Activated naive CD4-positive, alpha-beta T cell treated with anti-CD3 and anti-CD28 coated beads, Interleukin-2, amount 10 ng/mL, durations not matched to agents 7 days and 5 days (primary cell): ENCODE measurements at regions of chr17 and their contacts with region 1.

Region 1: DNA sequence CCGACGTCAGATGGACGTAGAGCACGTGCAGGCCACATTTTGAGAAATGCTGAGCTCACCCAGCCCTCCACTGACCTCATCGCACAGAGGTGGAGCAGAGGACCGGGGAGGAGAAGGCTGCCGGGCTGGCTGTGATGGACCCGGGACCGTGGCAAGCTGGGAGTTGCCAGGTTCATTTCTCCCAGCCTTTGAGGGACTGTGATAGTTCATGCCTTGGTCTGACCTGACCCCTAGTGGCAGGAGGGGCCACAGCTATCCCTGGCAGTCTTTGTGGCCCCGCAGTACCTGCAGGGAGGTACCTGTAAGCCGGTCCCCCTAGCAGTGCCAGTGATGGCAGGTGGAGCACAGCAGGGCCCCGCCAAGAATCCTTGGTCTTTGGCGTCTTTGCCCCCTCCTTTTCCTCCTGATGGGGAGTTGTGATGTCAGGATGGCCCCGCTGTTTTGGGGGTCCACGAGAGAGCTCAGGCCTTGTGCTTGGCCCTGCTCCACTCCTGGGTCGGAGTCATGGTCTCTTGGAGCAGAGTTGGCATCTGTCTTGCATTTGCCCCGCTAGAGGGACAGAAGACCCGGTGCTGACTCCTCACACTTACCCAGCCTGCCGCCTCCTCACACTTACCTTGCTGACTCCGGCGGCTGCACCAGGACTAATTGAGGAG is 50.4 kb downstream of the OR1D5 start:
- DNase-seq: peak; percentile 66
- H3K4me3 Mint-ChIP-seq: no peak overlapping the region
- H3K27ac Mint-ChIP-seq: no peak overlapping the region
- H3K4me1 Mint-ChIP-seq: no peaks in the 10 kb centered on the region
- H3K27me3 Mint-ChIP-seq: no peaks in the 10 kb centered on the region

Region 2: GRCh38 chr17:2847381-2848333 is 165.4 kb before region 1 on chr17:
- CTCF ChIA-PET with region 1: interaction called, 27 read pairs
- DNase-seq: no peak
- H3K4me3 Mint-ChIP-seq: no peak overlapping the region
- H3K27ac Mint-ChIP-seq: no peak overlapping the region
- H3K4me1 Mint-ChIP-seq: peaks cover 18% of the 10 kb centered on the region
- H3K27me3 Mint-ChIP-seq: peaks cover 45% of the 10 kb centered on the region

Region 3: DNA sequence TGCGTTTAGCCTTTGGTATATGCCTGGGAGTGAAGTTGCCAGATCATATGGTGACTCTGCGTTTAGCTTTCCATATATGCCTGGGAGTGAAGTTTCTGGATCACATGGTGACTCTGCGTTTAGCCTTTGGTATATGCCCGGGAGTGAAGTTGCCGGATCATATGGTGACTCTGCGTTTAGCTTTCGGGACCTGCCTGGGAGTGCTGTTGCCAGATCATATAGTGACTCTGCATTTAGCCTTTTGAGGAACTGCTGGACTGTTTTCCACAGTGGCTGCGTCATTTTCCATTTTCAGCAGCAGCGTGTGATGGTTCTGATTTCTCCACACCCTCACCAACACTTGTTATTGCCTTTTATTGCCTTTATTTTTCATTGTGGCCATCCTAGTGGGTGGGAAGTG is 22.7 kb before region 1 on chr17:
- CTCF ChIA-PET with region 1: no interaction called
- DNase-seq: no peak
- H3K4me3 Mint-ChIP-seq: no peak overlapping the region
- H3K27ac Mint-ChIP-seq: no peak overlapping the region
- H3K4me1 Mint-ChIP-seq: no peaks in the 10 kb centered on the region
- H3K27me3 Mint-ChIP-seq: no peaks in the 10 kb centered on the region